GM13976 (cell line): ENCODE measurements at regions of chr19 and their contacts with region 1.

Region 1: GRCh38 chr19:9796113-9796773 is 22.6 kb downstream of the FBXL12 start:
- DNase-seq: peak; percentile 77
- CTCF ChIP-seq: peak; percentile 67

Region 2: GRCh38 chr19:9139609-9140158 is 656.6 kb before region 1 on chr19:
- in situ Hi-C with region 1: loop called (anchors 10 kb)
- DNase-seq: no peak
- CTCF ChIP-seq: no peak

Region 3: DNA sequence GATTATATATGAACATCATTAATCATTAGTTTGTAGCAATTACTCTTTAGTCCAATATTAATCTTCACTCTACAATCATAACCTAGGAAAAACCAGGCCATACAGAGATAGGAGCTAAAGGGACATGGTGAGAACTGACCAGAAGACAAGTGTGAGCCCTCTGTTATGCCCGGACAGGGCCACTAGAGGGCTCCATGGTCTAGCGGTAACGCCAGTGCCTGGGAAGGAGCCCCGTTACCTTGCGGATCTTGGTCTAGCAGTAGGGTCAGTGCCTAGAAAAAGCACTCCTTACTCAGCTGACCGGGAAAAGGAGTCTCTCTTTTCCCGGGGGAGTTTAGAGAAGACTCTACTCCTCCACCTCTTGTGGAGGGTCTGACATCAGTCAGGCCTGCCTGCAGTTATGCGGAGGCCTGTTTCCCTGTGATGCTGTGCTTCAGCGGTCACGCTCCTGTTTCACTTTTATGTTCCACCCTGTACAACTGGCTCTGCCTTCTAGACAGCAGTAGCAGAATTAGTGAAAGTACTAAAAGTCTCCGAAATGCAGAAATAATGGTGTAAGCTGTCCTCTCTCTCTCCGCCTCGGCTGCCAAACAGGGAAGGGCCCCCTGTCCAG is 590.6 kb before region 1 on chr19:
- in situ Hi-C with region 1: loop called (anchors 10 kb)
- DNase-seq: peak; percentile 63
- CTCF ChIP-seq: peak; percentile 89

Region 4: DNA sequence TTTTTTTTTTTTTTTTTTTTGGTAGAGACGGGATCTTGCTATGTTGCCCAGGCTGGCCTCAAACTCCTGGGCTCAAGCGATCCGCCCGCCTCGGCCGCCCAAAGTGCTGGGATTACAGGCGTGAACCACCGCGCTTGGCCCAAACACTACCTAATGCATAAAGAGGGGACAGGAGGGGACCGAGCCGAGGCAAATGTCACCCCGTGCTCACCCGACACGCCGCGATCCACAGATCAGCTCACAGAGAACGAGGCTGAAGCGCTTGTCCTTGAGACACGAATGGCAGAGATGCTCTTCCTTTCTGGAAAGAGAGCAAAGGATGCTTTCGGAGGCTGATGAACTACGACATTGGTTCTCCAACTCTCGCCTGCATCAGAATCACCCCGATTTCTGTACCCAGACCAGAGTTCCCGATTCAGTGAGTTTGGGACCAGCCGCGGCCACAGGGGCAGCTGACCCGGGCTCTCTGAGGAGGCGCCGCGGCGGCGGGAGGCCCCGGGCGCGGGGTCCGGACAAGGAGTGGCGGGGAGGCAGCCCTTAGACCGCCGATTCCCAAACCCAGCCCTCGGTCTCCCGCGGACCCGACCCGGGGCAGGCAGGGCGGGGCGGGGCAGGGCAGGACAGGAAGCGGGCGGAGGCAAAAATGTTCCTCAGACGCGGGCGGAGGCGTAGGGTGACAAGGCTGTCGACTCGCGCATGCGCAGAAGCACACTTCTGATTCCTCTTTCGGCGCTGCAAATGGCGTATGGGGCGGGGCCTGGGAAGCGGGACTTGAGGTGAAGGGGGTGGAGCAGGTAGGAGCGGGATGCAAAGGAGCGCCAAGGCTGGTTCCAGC is 486.9 kb before region 1 on chr19 and contains the start of gene ZNF699:
- in situ Hi-C with region 1: loop called (anchors 10 kb)
- DNase-seq: peak; percentile 96
- CTCF ChIP-seq: no peak

Region 5: DNA sequence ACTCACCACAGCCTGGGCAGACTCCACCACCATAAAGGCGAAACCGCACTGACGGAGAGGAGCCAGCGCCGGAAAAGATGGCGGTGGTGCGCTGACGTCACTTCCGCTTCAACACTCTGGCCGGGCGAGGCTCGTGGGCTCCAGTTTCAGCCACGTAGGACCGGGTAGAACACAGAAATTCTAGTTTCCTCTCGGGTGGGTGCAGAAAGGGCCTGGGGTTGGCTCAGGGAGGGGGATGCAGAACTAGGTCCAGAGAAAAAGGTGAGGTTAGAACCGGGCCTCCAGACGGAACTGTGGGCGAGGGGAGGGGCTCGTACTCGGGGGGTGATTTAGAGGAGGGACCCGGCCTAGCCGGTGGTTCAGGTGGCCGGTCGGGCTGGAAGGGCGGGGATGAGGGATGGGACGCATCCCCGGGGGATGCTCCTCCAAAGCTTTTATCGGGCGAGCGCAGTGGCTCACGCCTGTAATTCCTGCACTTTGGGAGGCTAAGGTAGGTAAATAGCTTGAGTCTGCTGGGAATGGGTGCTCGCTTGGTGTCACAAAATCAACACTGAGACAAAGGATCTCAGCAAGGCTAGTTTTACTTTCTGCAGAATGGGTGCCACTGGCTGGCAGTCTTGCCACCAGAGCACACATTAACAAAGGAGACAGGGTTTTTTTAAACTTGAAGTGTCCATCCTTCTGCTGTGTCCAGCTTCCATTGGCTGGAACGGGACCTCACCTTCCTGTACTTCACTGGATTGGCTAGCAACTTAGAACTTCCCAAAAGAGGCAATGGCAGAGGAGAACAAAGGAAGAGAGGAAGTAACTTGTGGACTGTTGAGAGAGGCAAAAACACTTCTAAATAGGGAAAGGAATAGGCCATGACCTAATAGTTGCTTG is 174.8 kb before region 1 on chr19 and contains the start of gene ZNF561:
- in situ Hi-C with region 1: loop called (anchors 10 kb)
- DNase-seq: peak; percentile 83
- CTCF ChIP-seq: no peak